K562 (cell line): ENCODE measurements at regions of chr2 and their contacts with region 1.

Region 1: DNA sequence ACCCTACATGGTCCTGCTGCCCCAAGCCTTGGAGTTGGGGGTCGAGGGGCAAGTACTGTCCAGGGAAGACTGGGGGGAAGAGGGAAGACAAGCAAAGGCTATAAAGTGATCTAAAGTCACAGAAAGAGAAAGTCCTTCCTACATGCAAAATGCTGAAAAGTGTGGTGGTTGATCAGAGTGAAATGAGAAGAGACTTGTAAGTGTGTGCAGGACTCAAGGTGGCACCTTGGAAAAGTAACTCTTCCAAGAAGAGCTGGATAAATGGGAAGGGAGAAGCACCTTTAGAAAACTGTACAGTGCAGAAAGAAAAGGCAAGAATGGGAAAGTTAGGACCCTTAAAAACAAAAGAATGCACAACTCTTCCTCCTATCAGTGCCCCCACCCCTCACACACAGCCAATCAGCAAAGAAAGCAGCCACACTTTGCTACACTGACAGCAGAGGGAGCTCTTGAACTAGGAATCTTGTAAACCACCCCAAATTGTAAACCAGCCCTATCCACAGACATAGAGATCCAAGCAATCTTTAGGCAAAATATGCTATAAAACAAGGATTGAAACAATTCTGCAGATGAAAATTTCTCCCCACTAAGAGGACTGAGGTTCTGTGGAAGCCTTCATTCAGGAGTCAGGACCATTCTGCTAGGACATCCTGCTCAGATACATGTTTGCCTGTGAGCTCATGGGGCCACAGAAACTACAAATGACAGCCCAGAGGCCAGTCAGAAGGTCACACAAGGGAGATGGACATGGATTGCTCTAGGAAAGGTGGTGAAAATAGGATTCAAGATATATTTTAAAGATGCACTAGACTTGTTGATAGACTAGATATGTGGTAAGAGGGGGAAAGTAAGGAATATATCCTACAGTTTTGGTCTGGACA is 146.4 kb downstream of the FTCDNL1 start:
- DNase-seq: peak; percentile 19 to 61 (median 32)
- ATAC-seq: peak; percentile 91
- H3K4me3 ChIP-seq: no peak overlapping the region
- H3K27ac ChIP-seq: no peak overlapping the region
- H3K4me1 ChIP-seq: no peaks in the 10 kb centered on the region
- H3K27me3 ChIP-seq: no peaks in the 10 kb centered on the region
- CTCF ChIP-seq: peak; percentile 56 to 61 (median 56)
- EP300 ChIP-seq: no peak
- POLR2A ChIP-seq: no peak
- RAD21 ChIP-seq: peak; percentile 75 to 83

Region 2: DNA sequence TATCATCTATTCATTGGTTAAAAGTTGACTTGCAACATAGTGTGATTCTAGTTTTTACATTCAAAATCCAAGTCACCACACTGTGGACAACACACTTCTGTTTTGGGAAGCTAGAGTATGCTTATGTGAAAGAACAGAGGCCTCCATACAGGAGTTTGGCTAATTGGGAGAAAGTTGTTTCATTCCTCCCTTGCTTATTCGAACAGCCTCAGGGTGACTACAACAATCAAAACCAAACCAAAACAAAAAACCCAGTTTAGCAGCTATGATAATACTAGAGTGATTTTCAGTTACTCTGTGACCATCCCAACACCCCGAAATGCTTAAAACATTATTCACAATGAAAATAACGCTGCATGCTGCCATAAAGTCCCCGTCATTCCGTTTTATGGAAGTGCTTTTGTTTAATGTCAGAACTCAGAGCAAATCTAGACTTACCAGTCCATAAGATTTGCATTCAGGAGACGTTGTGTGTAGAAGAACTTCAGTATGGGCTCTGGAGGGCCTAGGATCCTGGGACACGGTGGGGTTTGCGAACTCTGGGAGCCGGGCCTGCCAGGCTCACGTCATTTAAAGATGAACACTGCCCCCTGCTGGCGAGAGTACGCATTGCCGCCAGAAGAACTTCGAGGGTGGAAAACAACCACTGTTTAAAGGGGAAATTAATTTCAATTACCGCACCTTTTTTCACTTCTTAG is 35.0 kb after region 1 on chr2:
- CTCF ChIA-PET with region 1: interaction called, 3 read pairs
- POLR2A ChIA-PET with region 1: no interaction called
- in situ Hi-C with region 1: no loop called
- intact Hi-C with region 1: loop called (anchors 1 kb)
- DNase-seq: peak; percentile 47 to 59 (median 58)
- ATAC-seq: peak; percentile 81
- H3K4me3 ChIP-seq: no peak overlapping the region
- H3K27ac ChIP-seq: no peak overlapping the region
- H3K4me1 ChIP-seq: no peaks in the 10 kb centered on the region
- H3K27me3 ChIP-seq: peaks cover 5 to 8% of the 10 kb centered on the region in 2 experiments; a peak in 3 of 5 replicates
- CTCF ChIP-seq: peak; percentile 56 to 77 (median 73)
- EP300 ChIP-seq: no peak
- POLR2A ChIP-seq: no peak
- RAD21 ChIP-seq: peak; percentile 67 to 71

Region 3: GRCh38 chr2:199861132-199861774 is 156.7 kb after region 1 on chr2:
- CTCF ChIA-PET with region 1: interaction called, 3 read pairs
- POLR2A ChIA-PET with region 1: no interaction called
- in situ Hi-C with region 1: no loop called
- intact Hi-C with region 1: loop called (anchors 1 kb)
- DNase-seq: peak in 2 of 4 experiments; percentile 5 to 11
- ATAC-seq: no peak
- H3K4me3 ChIP-seq: no peak overlapping the region
- H3K27ac ChIP-seq: no peak overlapping the region
- H3K4me1 ChIP-seq: no peaks in the 10 kb centered on the region; a peak in 1 of 5 replicates
- H3K27me3 ChIP-seq: no peaks in the 10 kb centered on the region; a peak in 1 of 5 replicates
- CTCF ChIP-seq: peak in 1 of 3 experiments; percentile 52; a peak in 2 of 6 replicates
- EP300 ChIP-seq: no peak
- POLR2A ChIP-seq: no peak
- RAD21 ChIP-seq: peak; percentile 58 to 60

Region 4: GRCh38 chr2:199940373-199940772 is 235.8 kb after region 1 on chr2:
- CTCF ChIA-PET with region 1: interaction called, 10 read pairs
- POLR2A ChIA-PET with region 1: no interaction called
- in situ Hi-C with region 1: no loop called
- intact Hi-C with region 1: loop called (anchors 5 kb)
- DNase-seq: no peak
- ATAC-seq: peak; percentile 76
- H3K4me3 ChIP-seq: no peak overlapping the region
- H3K27ac ChIP-seq: no peak overlapping the region
- H3K4me1 ChIP-seq: no peaks in the 10 kb centered on the region
- H3K27me3 ChIP-seq: no peaks in the 10 kb centered on the region
- CTCF ChIP-seq: peak in 1 of 3 experiments; percentile 44; a peak in 2 of 6 replicates
- EP300 ChIP-seq: no peak
- POLR2A ChIP-seq: no peak
- RAD21 ChIP-seq: peak; percentile 18 to 52; a peak in 2 of 4 replicates